GM10248 (cell line): ENCODE measurements at regions of chr12 and their contacts with region 1.

Region 1: DNA sequence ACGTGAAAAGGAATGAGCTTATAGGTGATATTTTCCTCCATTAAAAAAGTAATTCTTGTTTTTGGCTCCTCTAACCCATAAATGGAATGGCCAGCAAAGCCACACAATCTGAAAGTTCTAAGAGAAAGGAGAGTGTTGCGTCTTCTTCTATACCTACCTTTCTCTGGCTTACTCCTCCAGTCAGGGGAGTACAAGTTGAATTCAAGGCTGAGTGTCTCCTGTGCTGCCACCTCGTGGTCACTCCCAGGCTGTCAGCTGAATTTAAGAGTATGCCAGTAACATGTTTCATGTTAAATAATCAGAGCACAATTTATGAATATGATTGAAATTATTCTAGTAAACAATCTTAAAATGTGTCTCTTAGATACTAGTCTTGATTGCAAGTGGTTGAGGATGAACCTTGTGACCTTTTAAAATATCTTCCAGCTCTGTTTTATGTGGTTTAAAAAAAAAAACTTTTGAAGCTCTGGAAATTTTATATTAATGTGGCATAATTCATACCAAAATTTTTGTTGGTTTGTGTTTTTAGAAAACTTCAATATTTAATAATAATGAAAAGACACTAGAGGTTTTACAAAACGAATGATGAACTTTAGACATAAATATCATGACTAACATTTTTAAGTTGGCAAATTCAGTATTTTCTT is 31.7 kb downstream of the PTHLH start:
- DNase-seq: peak; percentile 66
- CTCF ChIP-seq: peak; percentile 88

Region 2: DNA sequence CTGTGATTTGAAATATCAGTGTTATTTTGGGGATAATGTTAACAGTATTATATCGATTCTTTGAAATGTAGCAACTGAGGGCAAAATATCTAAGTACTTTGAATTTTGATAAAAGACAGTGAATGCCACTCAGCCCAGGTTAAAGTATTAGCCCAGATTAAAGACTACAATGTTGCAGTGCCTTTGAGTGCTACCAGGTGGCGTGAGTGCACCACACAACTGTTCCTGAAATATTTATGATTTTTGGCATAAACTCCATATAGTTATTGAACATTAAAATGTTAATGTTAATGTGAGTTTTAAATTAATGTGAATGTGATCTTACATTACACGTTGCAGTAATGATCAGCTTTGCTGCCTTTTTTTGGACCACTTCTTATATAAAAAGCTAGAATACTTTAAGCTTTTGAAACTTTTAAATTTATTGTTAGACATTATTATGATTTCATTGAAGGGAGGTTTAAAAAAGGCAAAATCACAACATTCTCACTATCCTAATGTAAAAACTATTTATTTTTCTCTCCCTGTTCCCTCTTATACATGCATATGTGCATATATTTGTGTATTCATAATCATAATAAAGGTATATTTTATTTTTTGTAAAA is 207.7 kb before region 1 on chr12:
- CTCF ChIA-PET with region 1: interaction called, 175 read pairs
- POLR2A ChIA-PET with region 1: no interaction called
- DNase-seq: peak; percentile 39
- CTCF ChIP-seq: peak; percentile 83

Region 3: DNA sequence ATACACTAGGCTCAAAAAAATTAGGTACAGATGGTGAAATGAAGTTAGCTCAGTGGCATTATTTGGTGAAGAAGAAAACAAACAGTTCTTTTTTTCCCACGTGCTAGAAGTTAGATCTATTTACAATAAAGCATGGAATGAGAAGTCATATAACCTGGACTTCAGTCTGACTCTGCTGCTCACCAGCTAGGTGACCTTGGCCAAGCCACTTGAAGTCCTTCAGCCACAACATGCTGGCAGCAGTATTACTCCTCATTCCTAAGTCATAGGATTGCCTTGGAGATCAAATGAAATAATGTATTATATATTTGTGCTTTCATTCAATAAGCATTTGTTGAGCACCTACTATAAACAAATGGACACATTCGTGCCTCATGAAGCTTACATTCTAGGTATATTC is 13.5 kb before region 1 on chr12:
- CTCF ChIA-PET with region 1: interaction called, 15 read pairs
- POLR2A ChIA-PET with region 1: no interaction called
- DNase-seq: no peak
- CTCF ChIP-seq: no peak

Region 4: GRCh38 chr12:27952510-27952909 is 11.6 kb after region 1 on chr12:
- CTCF ChIA-PET with region 1: interaction called, 18 read pairs
- POLR2A ChIA-PET with region 1: no interaction called
- DNase-seq: no peak
- CTCF ChIP-seq: no peak

Region 5: DNA sequence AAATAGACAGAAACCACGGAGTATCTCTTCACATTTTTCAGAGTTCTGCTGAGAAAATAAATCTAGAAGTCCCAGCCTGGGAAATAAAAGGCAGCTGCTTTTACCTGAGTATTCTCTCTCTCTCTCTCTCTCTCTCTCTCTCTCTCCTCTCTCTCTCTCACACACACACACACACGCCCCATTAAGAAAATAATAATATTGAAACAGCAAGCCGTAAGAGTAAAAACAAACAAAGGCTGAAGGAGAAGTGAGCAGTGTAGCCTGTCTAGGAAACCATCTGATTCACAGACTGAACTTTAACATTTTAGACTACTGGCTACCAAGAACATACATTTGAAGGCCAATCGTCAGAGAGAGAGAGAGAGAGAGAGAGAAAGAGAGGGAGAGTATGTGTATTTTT is 23.2 kb after region 1 on chr12:
- CTCF ChIA-PET with region 1: interaction called, 11 read pairs
- POLR2A ChIA-PET with region 1: no interaction called
- DNase-seq: no peak
- CTCF ChIP-seq: no peak